Activated CD4-positive, alpha-beta memory T cell treated with anti-CD3 and anti-CD28 coated beads for 36 hours (primary cell): ENCODE measurements at regions of chr14 and their contacts with region 1.

Region 1: DNA sequence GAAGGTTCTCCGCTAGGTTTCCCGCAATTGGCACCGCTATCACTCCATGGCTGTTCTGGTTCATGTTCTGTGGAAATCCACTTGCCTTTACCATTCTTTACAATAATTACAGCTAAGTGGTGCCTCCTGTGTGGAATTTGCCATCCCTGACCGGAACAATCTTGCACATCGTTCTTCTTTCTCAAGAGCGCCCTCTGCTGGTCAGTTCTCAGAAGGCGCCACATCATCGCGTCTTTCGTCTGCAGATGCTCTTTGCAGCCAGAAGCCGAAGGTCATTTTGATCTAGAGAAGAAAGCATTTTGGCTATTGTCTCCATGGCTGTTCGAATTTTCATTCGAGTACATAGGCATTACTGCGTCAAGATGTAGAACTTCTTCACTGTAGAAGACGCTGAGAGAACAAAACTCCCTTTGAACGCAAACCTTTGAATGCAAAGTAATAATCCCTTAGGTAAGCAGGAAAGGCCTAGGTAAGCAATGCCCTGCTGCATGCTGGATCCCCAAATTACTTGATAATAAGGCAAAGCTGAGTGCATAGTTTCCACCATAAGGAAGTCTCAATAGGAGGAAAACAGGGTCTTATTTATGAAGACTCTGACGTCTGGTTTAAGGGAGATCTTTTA is 10.1 kb upstream of the RTRAF start:
- DNase-seq: peak; percentile 88
- H3K4me3 Mint-ChIP-seq: no peak overlapping the region
- H3K27ac Mint-ChIP-seq: no peak overlapping the region
- H3K4me1 Mint-ChIP-seq: peaks cover 10% of the 10 kb centered on the region
- H3K27me3 Mint-ChIP-seq: no peaks in the 10 kb centered on the region

Region 2: DNA sequence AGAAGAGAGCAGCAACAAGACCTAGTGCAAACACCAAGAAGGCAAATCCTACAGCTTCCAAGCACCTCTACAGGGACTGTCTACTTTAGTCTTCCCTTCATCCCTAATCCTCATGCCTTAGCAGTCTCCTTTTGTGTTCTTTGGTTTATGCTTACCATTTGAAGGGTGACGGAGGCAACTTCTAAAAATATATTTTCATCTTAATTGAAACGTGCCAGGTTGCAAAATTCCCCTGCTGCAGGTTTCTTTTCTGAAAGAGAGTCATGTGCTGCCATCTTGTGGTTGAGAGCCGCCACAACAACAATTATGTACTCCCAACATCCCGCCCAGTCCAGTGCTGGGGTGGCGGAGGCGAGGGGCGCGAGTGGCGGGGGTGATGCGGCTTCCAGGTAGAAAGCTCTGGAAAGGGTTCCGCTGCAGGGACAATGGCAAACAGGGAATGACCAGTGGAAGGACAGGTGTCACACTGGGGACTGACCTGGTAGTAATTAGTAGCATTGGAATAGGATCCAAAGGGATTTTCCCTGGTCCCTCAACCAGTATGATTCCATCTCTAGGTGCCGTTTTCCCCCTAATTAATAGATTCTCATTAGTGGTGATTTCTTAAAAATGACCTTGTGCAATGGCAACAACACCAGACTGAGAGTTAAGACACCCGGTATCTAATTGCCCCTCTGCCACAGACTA is 199.1 kb before region 1 on chr14:
- CTCF ChIA-PET with region 1: interaction called, 30 read pairs
- POLR2A ChIA-PET with region 1: no interaction called
- intact Hi-C with region 1: loop called (anchors 2 kb)
- DNase-seq: peak; percentile 81
- H3K4me3 Mint-ChIP-seq: no peak overlapping the region
- H3K27ac Mint-ChIP-seq: no peak overlapping the region
- H3K4me1 Mint-ChIP-seq: peaks cover 24% of the 10 kb centered on the region
- H3K27me3 Mint-ChIP-seq: peaks cover 18% of the 10 kb centered on the region

Region 3: GRCh38 chr14:51860164-51860824 is 118.9 kb before region 1 on chr14 and contains the start of gene GNG2:
- CTCF ChIA-PET with region 1: interaction called, 14 read pairs
- POLR2A ChIA-PET with region 1: no interaction called
- intact Hi-C with region 1: no loop called
- DNase-seq: peak; percentile 91
- H3K4me3 Mint-ChIP-seq: peak within 1 kb of the TSS; percentile 96
- H3K27ac Mint-ChIP-seq: peak within 1 kb of the TSS; percentile 96
- H3K4me1 Mint-ChIP-seq: peaks cover 52% of the 10 kb centered on the region
- H3K27me3 Mint-ChIP-seq: no peaks in the 10 kb centered on the region
- total RNA-seq, gene GNG2: 146 TPM

Region 4: DNA sequence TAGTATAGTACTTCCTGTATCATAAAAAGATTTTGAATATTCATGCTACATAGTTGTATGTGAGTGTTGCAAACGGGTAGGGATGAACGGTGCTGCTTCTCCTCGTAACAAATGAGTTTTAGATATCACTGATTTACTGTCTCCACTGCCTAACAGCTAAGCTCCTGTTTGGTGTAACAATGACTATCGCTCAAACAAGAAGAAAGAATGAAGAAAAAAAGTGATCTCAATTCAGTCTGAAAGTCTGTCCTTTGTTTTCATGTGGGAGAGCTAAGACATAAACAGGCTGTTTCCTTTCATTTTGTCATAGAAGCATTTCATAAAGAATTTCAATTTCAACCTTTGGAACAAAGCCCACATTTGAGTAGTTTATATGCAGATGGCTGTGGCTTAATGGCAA is 15.9 kb before region 1 on chr14:
- CTCF ChIA-PET with region 1: interaction called, 15 read pairs
- POLR2A ChIA-PET with region 1: interaction called, 3 read pairs
- intact Hi-C with region 1: no loop called
- DNase-seq: no peak
- H3K4me3 Mint-ChIP-seq: no peak overlapping the region
- H3K27ac Mint-ChIP-seq: no peak overlapping the region
- H3K4me1 Mint-ChIP-seq: peaks cover 40% of the 10 kb centered on the region
- H3K27me3 Mint-ChIP-seq: no peaks in the 10 kb centered on the region

Region 5: GRCh38 chr14:51996148-51996746 is 17.0 kb after region 1 on chr14:
- CTCF ChIA-PET with region 1: interaction called, 15 read pairs
- POLR2A ChIA-PET with region 1: no interaction called
- intact Hi-C with region 1: no loop called
- DNase-seq: no peak
- H3K4me3 Mint-ChIP-seq: no peak overlapping the region
- H3K27ac Mint-ChIP-seq: no peak overlapping the region
- H3K4me1 Mint-ChIP-seq: peaks cover 26% of the 10 kb centered on the region
- H3K27me3 Mint-ChIP-seq: no peaks in the 10 kb centered on the region